Motor neuron (in vitro differentiated cells): ENCODE measurements at regions of chr6 and their contacts with region 1.

Region 1: GRCh38 chr6:30914076-30914853 is at the start of gene VARS2:
- ATAC-seq: peak; percentile 89 to 95 (median 93)
- H3K4me3 ChIP-seq: peak within 1 kb of the TSS; percentile 34 to 49 (median 44)
- H3K27ac ChIP-seq: peak within 1 kb of the TSS; percentile 79 to 96
- H3K4me1 ChIP-seq: peaks cover 17 to 24% of the 10 kb centered on the region in 2 donors
- total RNA-seq, gene VARS2: 13.5 to 39.7 (median 21.0) TPM

Region 2: GRCh38 chr6:30091577-30092381 is 822.5 kb before region 1 on chr6:
- in situ Hi-C with region 1: no loop called
- ATAC-seq: peak in 4 of 8 experiments; percentile 15 to 94 (median 86)
- H3K4me3 ChIP-seq: no peak overlapping the region
- H3K27ac ChIP-seq: no peak overlapping the region
- H3K4me1 ChIP-seq: no peaks in the 10 kb centered on the region

Region 3: DNA sequence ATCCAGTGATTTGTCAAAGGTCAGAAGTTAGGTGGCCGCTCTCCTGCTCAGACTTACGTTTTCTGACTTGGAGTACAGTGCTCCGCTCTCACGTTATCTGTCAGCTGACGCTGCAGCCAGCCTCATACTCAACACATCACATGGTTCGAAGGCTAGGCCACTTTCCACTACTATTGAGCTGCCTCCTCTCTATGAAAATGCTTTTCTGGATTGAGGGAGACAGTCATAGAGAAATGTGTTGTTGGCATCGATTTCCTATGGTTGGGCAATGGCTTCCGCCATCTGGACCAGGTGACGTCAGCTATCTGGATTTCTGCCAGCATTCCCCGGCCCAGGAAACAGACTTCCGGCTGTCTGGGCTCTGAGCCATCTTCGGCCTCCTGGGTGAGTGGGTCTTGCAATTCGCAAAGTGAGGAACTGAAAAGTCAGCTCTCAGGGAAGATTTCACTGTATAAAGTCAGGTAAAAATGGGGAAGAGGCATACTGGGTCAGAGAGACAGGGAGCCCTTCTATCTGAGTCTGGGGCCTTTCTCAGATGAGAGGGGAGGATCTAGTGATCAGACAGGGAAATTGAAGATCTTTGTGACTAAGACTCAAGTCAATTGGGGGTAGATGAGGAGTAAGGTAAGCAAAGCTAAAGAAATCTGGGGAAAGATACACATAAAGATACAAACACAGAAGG is 132.4 kb before region 1 on chr6:
- in situ Hi-C with region 1: no loop called
- ATAC-seq: peak; percentile 69 to 94 (median 91)
- H3K4me3 ChIP-seq: no peak overlapping the region
- H3K27ac ChIP-seq: peak overlapping the region; percentile 52 to 70
- H3K4me1 ChIP-seq: peaks cover 3 to 16% of the 10 kb centered on the region in 2 donors

Region 4: GRCh38 chr6:31079656-31080261 is 165.5 kb after region 1 on chr6:
- in situ Hi-C with region 1: loop called in 7 of 9 experiments (anchors 10 to 25 kb)
- ATAC-seq: peak; percentile 70 to 87 (median 80)
- H3K4me3 ChIP-seq: no peak overlapping the region
- H3K27ac ChIP-seq: no peak overlapping the region
- H3K4me1 ChIP-seq: peaks cover 0 to 9% of the 10 kb centered on the region in 2 donors